G401 (cell line): ENCODE measurements at regions of chr12 and their contacts with region 1.

Region 1: GRCh38 chr12:27434673-27435565 is 11.6 kb upstream of the SMCO2 start:
- DNase-seq: peak; percentile 5

Region 2: GRCh38 chr12:27534060-27534764 is 99.3 kb after region 1 on chr12:
- in situ Hi-C with region 1: loop called (anchors 10 kb)
- DNase-seq: no peak